ENCODE measurements at regions of chr11 and their contacts with region 1.

Region 1: DNA sequence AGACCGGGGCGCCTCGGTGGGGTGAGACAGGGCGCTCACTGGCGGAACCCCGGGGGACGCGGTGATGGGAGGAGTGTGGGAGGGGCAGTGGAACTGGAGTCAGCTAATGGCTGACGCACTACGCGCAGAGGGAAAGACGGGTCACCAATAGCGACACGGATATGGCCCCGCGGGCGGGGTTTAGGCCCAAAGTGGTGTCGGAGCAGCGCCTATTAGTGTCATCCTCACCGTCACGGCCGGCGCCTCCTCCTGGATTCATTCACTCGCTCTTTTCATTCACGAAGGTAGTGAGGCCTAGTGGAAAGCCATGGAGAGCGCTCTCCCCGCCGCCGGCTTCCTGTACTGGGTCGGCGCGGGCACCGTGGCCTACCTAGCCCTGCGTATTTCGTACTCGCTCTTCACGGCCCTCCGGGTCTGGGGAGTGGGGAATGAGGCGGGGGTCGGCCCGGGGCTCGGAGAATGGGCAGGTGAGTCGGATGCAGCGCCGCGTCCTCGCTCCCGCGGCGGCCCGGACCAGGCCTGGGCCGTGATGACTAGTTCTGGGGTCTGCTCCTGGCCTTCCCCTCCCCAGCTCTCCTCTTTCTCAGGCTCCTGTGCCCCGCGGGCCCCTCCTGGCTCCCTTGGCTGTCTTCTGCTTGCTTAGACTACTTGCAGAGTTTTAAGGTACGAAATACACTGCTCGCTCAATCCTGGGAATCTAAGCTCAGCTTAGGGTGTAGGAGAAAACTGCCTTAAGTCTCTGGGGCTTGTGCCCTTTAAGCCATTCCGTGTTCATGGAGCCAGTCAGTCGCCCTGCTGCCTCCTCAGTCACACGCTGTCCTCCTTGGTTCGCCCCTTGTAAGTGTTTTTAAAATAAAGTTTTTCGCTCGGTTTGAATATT is at the start of gene HSD17B12:
- DNase-seq: peak; percentile 98
- ATAC-seq: peak; percentile 99
- H3K4me3 ChIP-seq: peak within 1 kb of the TSS; percentile 80 to 95 (median 91)
- H3K27ac ChIP-seq: peak within 1 kb of the TSS; percentile 89
- H3K4me1 ChIP-seq: peaks cover 39% of the 10 kb centered on the region
- H3K27me3 ChIP-seq: no peaks in the 10 kb centered on the region; a peak in 1 of 5 replicates
- CTCF ChIP-seq: peak; percentile 35
- EP300 ChIP-seq: no peak; a peak in 1 of 4 replicates
- POLR2A ChIP-seq: peak; percentile 91 to 94
- RAD21 ChIP-seq: 0 out of 2 replicates have a peak, but pooled peaks have one; percentile 36
- total RNA-seq, gene HSD17B12: 76.8 and 117 TPM in 2 replicates

Region 2: DNA sequence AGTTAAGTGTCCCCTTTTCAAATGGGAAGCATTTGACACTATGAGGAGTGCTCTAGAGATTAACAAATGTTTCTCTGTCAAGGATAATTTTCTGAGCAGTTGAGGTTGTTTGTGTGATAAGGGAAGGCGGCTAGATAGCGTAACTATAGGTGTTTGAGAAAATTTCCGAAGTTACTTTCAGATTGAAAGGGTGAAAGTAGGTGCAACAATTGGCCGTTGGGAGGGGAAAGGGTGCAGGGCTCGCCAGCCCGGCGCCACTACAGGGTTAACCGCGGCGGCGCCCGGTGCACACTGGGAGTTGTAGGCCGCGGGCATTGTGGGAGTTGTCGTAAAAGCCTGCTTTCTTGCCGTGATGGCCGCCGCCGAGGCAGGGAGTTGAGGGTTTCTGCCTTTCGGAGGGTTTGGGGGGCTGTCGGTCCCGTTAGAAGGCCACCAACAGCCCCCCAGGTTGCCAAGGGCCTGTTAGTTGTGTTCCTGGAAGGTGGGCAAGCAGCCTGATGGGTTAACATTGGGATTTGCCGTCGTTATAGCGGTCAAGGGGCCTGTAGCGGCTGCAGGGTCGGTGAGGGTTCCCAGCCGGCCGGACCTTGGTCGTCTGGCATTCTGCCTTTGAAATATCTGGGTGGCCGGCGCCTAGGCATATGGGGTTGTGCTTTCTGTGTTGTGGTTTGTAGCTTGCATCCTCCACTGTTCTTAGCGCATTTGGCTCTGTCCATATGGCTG is 36.7 kb before region 1 on chr11:
- CTCF ChIA-PET with region 1: no interaction called
- POLR2A ChIA-PET with region 1: interaction called, 7 read pairs
- in situ Hi-C with region 1: no loop called
- intact Hi-C with region 1: loop called (anchors 2 kb)
- DNase-seq: peak; percentile 77
- ATAC-seq: peak; percentile 99
- H3K4me3 ChIP-seq: peak overlapping the region; percentile 77 to 92 (median 91)
- H3K27ac ChIP-seq: peak overlapping the region; percentile 86
- H3K4me1 ChIP-seq: peaks cover 26% of the 10 kb centered on the region
- H3K27me3 ChIP-seq: peaks cover 0 to 8% of the 10 kb centered on the region in 2 experiments; a peak in 1 of 5 replicates
- CTCF ChIP-seq: 0 out of 2 replicates have a peak, but pooled peaks have one; percentile 2
- EP300 ChIP-seq: peak in 1 of 2 experiments; percentile 25; a peak in 1 of 4 replicates
- POLR2A ChIP-seq: peak; percentile 81 to 86
- RAD21 ChIP-seq: 0 out of 2 replicates have a peak, but pooled peaks have one; percentile 25

Region 3: DNA sequence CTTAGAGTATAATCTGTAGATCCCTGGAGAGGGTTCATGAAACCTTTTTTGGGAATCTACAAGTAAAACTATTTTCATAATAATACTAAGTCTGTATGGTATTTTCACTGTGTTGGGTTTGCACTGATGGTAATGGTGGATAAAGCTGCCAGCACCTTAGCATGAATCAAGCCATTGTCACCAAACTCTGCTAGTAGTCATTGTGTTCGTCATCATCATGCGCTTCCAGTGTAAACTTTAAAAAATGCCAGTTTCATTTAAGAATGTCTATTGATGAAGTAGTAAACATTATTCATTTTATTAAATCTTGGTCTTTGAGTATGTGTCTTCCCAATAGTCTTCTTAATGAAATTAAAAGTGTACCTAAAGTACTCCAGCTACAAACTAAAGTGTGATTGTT is 214.8 kb after region 1 on chr11:
- CTCF ChIA-PET with region 1: no interaction called
- POLR2A ChIA-PET with region 1: no interaction called
- in situ Hi-C with region 1: no loop called
- intact Hi-C with region 1: no loop called
- DNase-seq: no peak
- ATAC-seq: no peak
- H3K4me3 ChIP-seq: no peak overlapping the region
- H3K27ac ChIP-seq: no peak overlapping the region
- H3K4me1 ChIP-seq: no peaks in the 10 kb centered on the region
- H3K27me3 ChIP-seq: no peaks in the 10 kb centered on the region
- CTCF ChIP-seq: no peak
- EP300 ChIP-seq: no peak
- POLR2A ChIP-seq: no peak
- RAD21 ChIP-seq: no peak